Pancreas (tissue), 10 donors: ENCODE measurements at regions of chr9 and their contacts with region 1.

Region 1: GRCh38 chr9:113664181-113664875 is 200.8 kb downstream of the RGS3 start:
- DNase-seq: no peak
- ATAC-seq: no peak
- H3K4me3 ChIP-seq: no peak overlapping the region
- H3K27ac ChIP-seq: no peak overlapping the region
- H3K4me1 ChIP-seq: no peaks in the 10 kb centered on the region
- H3K27me3 ChIP-seq: no peaks in the 10 kb centered on the region
- CTCF ChIP-seq: no peak

Region 2: DNA sequence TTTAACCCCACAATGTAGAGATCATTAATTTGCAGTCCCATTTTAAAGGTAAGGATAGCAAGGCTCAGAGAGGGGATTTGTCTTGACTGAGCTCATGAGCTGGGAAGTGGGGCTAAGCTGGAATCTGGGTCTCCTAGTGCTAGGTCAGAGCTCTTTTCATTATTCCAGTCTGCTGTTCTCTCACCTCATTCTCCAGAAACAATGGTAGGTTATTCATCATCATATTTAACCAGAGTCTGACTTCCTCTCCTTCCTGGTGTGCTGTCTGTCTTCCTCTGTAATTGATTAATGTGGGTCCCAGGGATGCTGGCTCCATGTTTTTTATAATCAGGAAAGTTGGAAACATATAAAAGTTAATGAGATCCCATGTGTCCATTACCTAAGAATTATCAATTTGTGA is 233.1 kb before region 1 on chr9:
- intact Hi-C with region 1: loop called in 2 of 3 experiments (anchors 5 kb)
- DNase-seq: no peak
- ATAC-seq: no peak
- H3K4me3 ChIP-seq: no peak overlapping the region
- H3K27ac ChIP-seq: no peak overlapping the region
- H3K4me1 ChIP-seq: no peaks in the 10 kb centered on the region
- H3K27me3 ChIP-seq: no peaks in the 10 kb centered on the region
- CTCF ChIP-seq: no peak

Region 3: DNA sequence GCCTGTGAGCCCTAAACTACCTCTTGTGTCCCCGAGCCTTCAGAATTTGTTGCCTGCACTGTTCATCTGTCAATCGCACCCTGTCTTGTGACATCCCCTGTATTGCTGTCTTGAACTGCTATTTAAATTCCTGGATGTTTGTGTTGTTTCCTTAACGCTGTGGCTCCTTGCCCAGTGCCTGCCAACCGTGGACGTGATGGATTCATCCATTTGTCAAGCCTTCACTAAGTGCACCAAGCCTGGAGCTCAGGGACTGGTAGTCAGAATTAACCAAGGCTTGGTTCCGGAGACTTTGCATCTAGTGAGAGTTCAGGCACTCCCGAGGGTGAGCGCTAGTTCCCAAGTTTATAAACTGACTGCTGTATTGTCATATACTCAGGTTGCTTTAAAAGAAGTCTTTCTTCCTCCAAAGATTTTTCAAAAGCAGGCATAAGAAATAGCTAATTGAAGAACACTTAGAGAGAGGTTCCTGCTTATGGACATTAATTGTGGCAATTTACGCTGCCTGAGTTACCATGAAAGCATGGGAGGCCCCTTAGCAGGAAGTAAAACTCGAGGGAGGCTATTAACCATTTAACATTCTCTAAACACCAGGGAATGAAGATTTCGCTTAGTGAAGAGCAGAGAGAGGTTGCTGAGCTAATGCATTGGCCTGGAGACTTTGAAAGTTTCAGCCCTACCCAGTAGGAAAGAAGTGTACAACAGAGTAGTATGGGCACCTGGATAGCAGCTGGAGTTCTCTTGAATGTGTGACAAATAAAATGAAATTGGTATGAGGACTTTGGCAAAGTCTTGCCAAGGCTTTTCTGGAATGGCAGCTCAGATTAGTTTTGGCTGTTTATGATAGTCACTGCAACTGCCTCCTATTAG is 171.8 kb before region 1 on chr9:
- intact Hi-C with region 1: no loop called
- DNase-seq: peak in 2 of 6 donors; percentile 46 to 49
- ATAC-seq: peak; percentile 53 to 72 (median 68)
- H3K4me3 ChIP-seq: no peak overlapping the region
- H3K27ac ChIP-seq: peak overlapping the region in 3 of 4 donors; percentile 14 to 34 (median 19)
- H3K4me1 ChIP-seq: peaks cover 0 to 11% (median 3%) of the 10 kb centered on the region in 3 donors
- H3K27me3 ChIP-seq: no peaks in the 10 kb centered on the region
- CTCF ChIP-seq: no peak